Activated CD4-positive, alpha-beta memory T cell treated with anti-CD3 and anti-CD28 coated beads for 36 hours (primary cell): ENCODE measurements at regions of chr10 and their contacts with region 1.

Region 1: DNA sequence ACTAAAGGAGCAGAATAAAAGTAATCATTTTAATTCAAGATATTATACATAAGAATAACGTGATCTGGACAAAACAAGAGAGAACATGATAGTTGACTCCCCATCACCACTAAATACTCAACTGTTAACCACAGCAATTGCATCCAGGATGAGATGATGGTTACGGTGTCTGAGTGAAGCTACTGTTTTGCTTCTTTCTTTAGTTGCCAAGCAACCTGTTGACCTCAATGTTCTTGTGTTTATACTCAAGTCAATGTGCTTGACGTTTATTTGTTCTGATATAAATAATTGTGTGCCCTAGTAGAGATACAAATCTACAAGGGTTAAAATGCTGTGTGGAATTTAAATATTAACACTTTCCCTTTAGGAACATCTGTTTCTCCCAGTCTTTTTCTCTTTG is 31.4 kb upstream of the MPP7 start:
- DNase-seq: peak; percentile 44
- H3K4me3 Mint-ChIP-seq: peak overlapping the region; percentile 78
- H3K27ac Mint-ChIP-seq: peak overlapping the region; percentile 99
- H3K4me1 Mint-ChIP-seq: peaks cover 54% of the 10 kb centered on the region
- H3K27me3 Mint-ChIP-seq: no peaks in the 10 kb centered on the region

Region 2: GRCh38 chr10:27155066-27155754 is 1179.1 kb before region 1 on chr10 and contains the start of gene MASTL:
- CTCF ChIA-PET with region 1: no interaction called
- POLR2A ChIA-PET with region 1: no interaction called
- intact Hi-C with region 1: loop called (anchors 10 kb)
- DNase-seq: peak; percentile 96
- H3K4me3 Mint-ChIP-seq: peak within 1 kb of the TSS; percentile 97
- H3K27ac Mint-ChIP-seq: peak within 1 kb of the TSS; percentile 100
- H3K4me1 Mint-ChIP-seq: peaks cover 39% of the 10 kb centered on the region
- H3K27me3 Mint-ChIP-seq: no peaks in the 10 kb centered on the region
- total RNA-seq, gene MASTL: 44.2 to 50.4 TPM

Region 3: GRCh38 chr10:27742195-27743011 is 591.9 kb before region 1 on chr10:
- CTCF ChIA-PET with region 1: no interaction called
- POLR2A ChIA-PET with region 1: no interaction called
- intact Hi-C with region 1: loop called (anchors 1 kb)
- DNase-seq: peak; percentile 91
- H3K4me3 Mint-ChIP-seq: peak overlapping the region; percentile 74
- H3K27ac Mint-ChIP-seq: no peak overlapping the region
- H3K4me1 Mint-ChIP-seq: peaks cover 39% of the 10 kb centered on the region
- H3K27me3 Mint-ChIP-seq: peaks cover 49% of the 10 kb centered on the region

Region 4: GRCh38 chr10:28291881-28292297 is 42.4 kb before region 1 on chr10:
- CTCF ChIA-PET with region 1: interaction called, 3 read pairs
- POLR2A ChIA-PET with region 1: no interaction called
- intact Hi-C with region 1: loop called (anchors 1 kb)
- DNase-seq: peak; percentile 77
- H3K4me3 Mint-ChIP-seq: no peak overlapping the region
- H3K27ac Mint-ChIP-seq: peak overlapping the region; percentile 7
- H3K4me1 Mint-ChIP-seq: peaks cover 43% of the 10 kb centered on the region
- H3K27me3 Mint-ChIP-seq: no peaks in the 10 kb centered on the region

Region 5: GRCh38 chr10:28320799-28321198 is 13.5 kb before region 1 on chr10:
- CTCF ChIA-PET with region 1: interaction called, 6 read pairs
- POLR2A ChIA-PET with region 1: interaction called, 11 read pairs
- intact Hi-C with region 1: no loop called
- DNase-seq: no peak
- H3K4me3 Mint-ChIP-seq: no peak overlapping the region
- H3K27ac Mint-ChIP-seq: no peak overlapping the region
- H3K4me1 Mint-ChIP-seq: peaks cover 28% of the 10 kb centered on the region
- H3K27me3 Mint-ChIP-seq: no peaks in the 10 kb centered on the region

Region 6: GRCh38 chr10:28381903-28382347 is 47.6 kb after region 1 on chr10:
- CTCF ChIA-PET with region 1: interaction called, 65 read pairs
- POLR2A ChIA-PET with region 1: interaction called, 31 read pairs
- intact Hi-C with region 1: loop called (anchors 1 kb)
- DNase-seq: peak; percentile 89
- H3K4me3 Mint-ChIP-seq: no peak overlapping the region
- H3K27ac Mint-ChIP-seq: no peak overlapping the region
- H3K4me1 Mint-ChIP-seq: peaks cover 28% of the 10 kb centered on the region
- H3K27me3 Mint-ChIP-seq: no peaks in the 10 kb centered on the region

Region 7: DNA sequence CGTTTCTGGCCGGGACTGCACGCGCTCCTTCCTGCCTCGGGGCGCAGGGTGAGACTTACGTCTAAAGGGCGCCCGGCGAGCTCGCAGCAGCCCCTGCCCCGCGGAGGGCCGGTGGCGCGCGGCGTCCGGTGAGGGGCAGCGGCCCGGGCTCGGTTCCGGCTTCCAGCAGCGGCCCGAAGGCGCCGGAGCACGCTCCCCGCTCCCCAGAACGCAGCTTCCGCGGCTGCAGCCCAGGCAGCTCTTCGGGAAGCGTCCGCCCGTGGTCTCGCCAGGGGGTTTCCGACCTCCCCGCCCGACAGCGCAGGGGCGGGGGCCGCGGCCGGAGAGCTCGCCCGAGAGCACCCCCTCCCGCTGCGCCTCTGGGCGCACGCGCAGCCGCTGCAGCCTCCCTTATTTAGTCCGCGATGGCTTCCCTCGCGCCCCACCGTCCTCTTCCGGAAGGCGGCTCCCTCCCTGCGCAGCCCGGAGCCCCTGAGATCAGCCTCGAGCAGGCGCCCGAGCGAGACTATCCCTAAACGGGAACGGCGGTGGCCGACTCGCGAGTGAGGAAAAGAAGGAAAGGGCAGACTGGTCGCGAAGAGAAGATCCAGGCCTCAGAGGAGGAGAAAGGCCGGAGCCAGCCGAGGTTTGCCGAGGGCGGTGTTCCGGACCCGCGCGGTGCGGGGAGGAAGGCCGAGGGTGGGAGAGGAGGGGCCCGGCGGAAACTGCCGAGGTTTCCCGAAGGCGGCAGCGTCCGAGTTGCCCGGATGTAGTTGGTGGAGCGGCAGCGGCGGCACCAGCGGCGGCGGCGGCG is 198.3 kb after region 1 on chr10 and contains the start of gene WAC:
- CTCF ChIA-PET with region 1: interaction called, 3 read pairs
- POLR2A ChIA-PET with region 1: no interaction called
- intact Hi-C with region 1: loop called (anchors 1 kb)
- DNase-seq: peak; percentile 98
- H3K4me3 Mint-ChIP-seq: peak within 1 kb of the TSS; percentile 98
- H3K27ac Mint-ChIP-seq: peak within 1 kb of the TSS; percentile 100
- H3K4me1 Mint-ChIP-seq: peaks cover 45% of the 10 kb centered on the region
- H3K27me3 Mint-ChIP-seq: no peaks in the 10 kb centered on the region
- total RNA-seq, gene WAC: 92.9 to 93.1 TPM